Calu3 (cell line): ENCODE measurements at regions of chr1 and their contacts with region 1.

Region 1: DNA sequence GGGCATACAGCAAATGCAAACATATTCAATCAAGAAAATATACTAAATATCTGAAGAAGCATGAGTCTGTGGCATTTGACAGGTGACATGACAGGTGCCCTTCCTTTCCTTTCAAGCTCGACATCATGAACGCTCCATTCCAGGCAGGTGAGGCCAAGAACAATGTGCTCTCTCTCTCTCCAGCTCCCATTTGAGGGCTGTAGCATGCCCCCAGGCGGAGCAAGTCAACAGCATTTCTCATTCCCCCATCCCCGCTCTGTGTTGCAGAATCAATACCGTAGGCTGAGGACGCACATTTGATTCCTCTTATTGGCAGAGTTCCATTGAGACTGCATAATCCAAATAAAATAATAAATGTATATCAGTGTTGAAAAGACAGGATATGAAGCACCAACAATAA is 24.6 kb upstream of the PLPPR4 start:
- DNase-seq: no peak
- H3K4me3 Mint-ChIP-seq: no peak overlapping the region
- H3K27ac Mint-ChIP-seq: no peak overlapping the region
- H3K4me1 Mint-ChIP-seq: no peaks in the 10 kb centered on the region
- H3K27me3 Mint-ChIP-seq: no peaks in the 10 kb centered on the region
- CTCF ChIP-seq: no peak

Region 2: GRCh38 chr1:99305626-99306025 is 65.9 kb after region 1 on chr1:
- CTCF ChIA-PET with region 1: no interaction called
- intact Hi-C with region 1: loop called (anchors 5 kb)
- DNase-seq: no peak
- H3K4me3 Mint-ChIP-seq: no peak overlapping the region
- H3K27ac Mint-ChIP-seq: no peak overlapping the region
- H3K4me1 Mint-ChIP-seq: no peaks in the 10 kb centered on the region
- H3K27me3 Mint-ChIP-seq: no peaks in the 10 kb centered on the region
- CTCF ChIP-seq: no peak

Region 3: GRCh38 chr1:99347041-99347684 is 107.5 kb after region 1 on chr1:
- CTCF ChIA-PET with region 1: no interaction called
- intact Hi-C with region 1: no loop called
- DNase-seq: no peak
- H3K4me3 Mint-ChIP-seq: no peak overlapping the region
- H3K27ac Mint-ChIP-seq: no peak overlapping the region
- H3K4me1 Mint-ChIP-seq: no peaks in the 10 kb centered on the region
- H3K27me3 Mint-ChIP-seq: no peaks in the 10 kb centered on the region
- CTCF ChIP-seq: no peak